ENCODE measurements at regions of chr1 and their contacts with region 1.

Region 1: DNA sequence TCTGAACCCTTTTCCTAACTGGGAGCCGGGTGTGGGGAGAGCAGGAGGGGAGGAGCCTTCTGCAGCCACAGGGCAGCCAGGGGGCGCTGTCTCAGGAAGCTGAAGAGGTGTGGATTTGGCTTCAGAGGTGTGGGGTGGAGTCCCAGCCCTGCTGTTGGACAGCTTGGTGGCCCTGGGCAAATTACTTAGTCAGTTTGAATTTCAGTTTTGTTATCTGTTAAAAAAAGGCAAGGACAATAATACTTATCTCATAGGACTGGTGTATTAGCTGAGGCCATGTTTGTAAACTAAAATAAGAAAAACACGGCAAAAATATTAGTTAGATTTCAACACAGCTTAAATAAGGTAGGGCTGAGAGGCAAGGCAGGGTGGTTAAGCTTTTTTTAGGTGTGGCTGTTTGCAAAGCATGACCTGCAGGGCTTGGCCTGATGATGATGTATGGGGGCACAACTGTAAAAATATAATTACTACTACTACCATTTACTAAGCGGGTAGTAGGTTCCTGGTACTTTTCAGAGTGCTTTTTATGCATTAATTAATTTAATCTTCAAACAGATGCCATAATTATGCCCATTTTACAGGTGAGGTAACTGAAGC is 111.8 kb downstream of the PLXNA2 start:
- DNase-seq: peak; percentile 92
- ATAC-seq: peak; percentile 90
- H3K4me3 Mint-ChIP-seq: peak overlapping the region; percentile 55
- H3K27ac Mint-ChIP-seq: no peak overlapping the region
- H3K4me1 Mint-ChIP-seq: peaks cover 63% of the 10 kb centered on the region
- H3K27me3 Mint-ChIP-seq: peaks cover 20% of the 10 kb centered on the region
- CTCF ChIP-seq: peak; percentile 87

Region 2: DNA sequence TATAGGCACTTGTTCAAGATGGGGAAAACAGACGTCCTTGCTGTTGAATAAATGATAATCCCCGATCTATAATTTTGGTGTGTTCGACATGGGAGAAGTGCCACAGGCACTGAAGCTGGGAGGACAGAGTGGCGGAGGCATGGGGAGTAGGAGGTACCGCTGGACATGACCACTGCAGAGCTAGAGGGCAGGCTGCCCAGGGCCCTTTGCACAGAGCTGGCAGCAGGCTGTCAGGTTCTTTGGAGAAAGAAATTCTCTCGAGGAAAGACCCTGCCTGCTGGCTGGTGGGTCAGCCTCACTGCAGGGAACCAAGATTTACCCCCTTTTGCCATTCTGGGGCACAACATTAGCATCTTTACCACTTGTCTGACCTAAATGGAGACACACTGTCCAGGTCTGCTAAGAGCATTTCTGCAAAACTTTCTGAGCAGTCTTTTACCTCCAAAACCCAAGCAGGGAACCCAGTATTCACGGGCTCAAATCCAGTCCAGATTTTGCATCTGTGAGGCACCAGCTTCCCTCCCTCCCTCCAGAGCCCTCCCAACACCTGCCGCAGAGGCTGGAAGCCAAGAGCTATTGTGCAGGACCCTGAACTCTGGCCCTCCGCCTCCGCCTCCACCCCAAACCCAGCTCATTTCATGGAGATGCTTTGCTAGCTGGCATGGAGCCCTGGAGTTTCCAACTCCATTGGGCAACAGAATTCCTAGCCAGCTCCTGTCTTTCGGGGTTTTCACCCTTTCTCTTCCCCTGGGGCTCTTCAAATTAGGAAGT is 30.5 kb before region 1 on chr1:
- CTCF ChIA-PET with region 1: interaction called, 11 read pairs
- POLR2A ChIA-PET with region 1: no interaction called
- DNase-seq: peak; percentile 26
- ATAC-seq: peak; percentile 79
- H3K4me3 Mint-ChIP-seq: no peak overlapping the region
- H3K27ac Mint-ChIP-seq: no peak overlapping the region
- H3K4me1 Mint-ChIP-seq: peaks cover 34% of the 10 kb centered on the region
- H3K27me3 Mint-ChIP-seq: no peaks in the 10 kb centered on the region; the same call in 1 of the 2 replicates
- CTCF ChIP-seq: no peak

Region 3: GRCh38 chr1:208118841-208119606 is 13.4 kb before region 1 on chr1:
- CTCF ChIA-PET with region 1: interaction called, 24 read pairs
- POLR2A ChIA-PET with region 1: no interaction called
- DNase-seq: no peak
- ATAC-seq: no peak
- H3K4me3 Mint-ChIP-seq: no peak overlapping the region
- H3K27ac Mint-ChIP-seq: no peak overlapping the region
- H3K4me1 Mint-ChIP-seq: peaks cover 7% of the 10 kb centered on the region
- H3K27me3 Mint-ChIP-seq: no peaks in the 10 kb centered on the region
- CTCF ChIP-seq: no peak

Region 4: DNA sequence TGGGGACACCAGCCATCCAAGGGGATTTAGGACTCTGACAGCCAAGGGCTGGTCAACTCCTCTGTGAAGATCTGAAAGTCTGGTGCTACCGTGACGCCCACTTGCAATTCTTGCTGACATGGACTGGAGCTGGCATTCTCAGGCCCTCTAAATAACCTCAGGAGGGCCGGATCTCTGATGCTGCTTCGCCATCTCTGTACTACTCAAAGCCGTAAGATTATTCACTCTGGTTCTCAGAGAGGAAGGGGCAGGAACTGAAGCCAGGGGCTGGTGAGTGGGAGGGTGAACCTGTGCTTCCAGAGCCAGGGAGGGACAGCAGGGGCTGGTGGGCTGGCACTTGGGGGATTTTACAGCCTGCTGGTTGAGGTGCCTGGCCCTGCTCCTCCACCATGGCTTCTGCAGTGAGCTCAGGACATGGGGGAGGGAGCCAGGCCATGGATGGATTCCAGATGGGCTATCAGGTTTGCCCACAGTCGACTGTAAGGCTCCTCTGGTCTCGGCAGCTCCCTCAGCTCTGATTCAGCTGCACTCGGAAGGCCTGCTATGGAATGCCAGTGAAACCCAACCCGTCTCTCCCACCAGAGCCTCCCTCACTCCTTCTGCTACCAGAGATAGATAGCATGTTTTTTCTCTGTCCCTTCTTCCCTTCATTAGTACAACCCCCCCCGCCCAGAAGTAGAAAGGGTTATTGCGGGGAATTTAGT is 27.3 kb after region 1 on chr1:
- CTCF ChIA-PET with region 1: interaction called, 42 read pairs
- POLR2A ChIA-PET with region 1: no interaction called
- DNase-seq: no peak
- ATAC-seq: peak; percentile 37
- H3K4me3 Mint-ChIP-seq: no peak overlapping the region
- H3K27ac Mint-ChIP-seq: no peak overlapping the region
- H3K4me1 Mint-ChIP-seq: peaks cover 51% of the 10 kb centered on the region
- H3K27me3 Mint-ChIP-seq: no peaks in the 10 kb centered on the region; the same call in 1 of the 2 replicates
- CTCF ChIP-seq: no peak

Region 5: GRCh38 chr1:208177656-208178055 is 45.3 kb after region 1 on chr1:
- CTCF ChIA-PET with region 1: interaction called, 23 read pairs
- POLR2A ChIA-PET with region 1: no interaction called
- DNase-seq: peak; percentile 60
- ATAC-seq: peak; percentile 66
- H3K4me3 Mint-ChIP-seq: 0 out of 2 replicates have a peak overlapping the region, but pooled peaks have one; percentile 4
- H3K27ac Mint-ChIP-seq: peak overlapping the region; percentile 91; the same call in 1 of the 2 replicates
- H3K4me1 Mint-ChIP-seq: peaks cover 59% of the 10 kb centered on the region
- H3K27me3 Mint-ChIP-seq: no peaks in the 10 kb centered on the region; the same call in 1 of the 2 replicates
- CTCF ChIP-seq: no peak

Region 6: GRCh38 chr1:208233546-208233945 is 101.2 kb after region 1 on chr1:
- CTCF ChIA-PET with region 1: interaction called, 40 read pairs
- POLR2A ChIA-PET with region 1: interaction called, 3 read pairs
- DNase-seq: peak; percentile 69
- ATAC-seq: peak; percentile 86
- H3K4me3 Mint-ChIP-seq: no peak overlapping the region
- H3K27ac Mint-ChIP-seq: peak overlapping the region; percentile 15
- H3K4me1 Mint-ChIP-seq: peaks cover 63% of the 10 kb centered on the region
- H3K27me3 Mint-ChIP-seq: peaks cover 2% of the 10 kb centered on the region
- CTCF ChIP-seq: no peak

Region 7: DNA sequence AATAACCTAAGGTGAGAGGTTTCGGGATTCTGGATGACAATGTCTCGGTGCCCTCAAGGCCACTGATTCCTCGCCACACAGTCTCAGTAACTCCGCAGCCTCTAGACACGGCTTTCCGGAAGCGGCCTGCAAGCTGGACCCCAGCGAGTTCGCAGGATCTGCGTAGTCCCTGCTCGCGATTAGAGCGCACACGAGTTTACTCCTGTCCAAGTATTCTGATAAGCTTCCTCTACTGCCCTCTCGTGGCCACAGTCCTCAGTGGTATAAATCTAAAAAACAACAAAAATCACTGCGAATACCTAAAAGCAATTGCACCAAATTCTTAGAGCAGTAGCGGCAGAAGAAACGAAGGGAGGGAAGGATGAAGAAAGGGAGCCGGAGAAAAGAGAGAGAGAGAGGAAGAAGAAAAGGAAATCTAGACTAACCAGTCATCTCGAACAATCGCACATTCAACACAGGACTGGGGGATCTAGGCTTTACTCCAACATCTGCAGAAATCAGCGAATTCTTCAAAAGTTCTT is 112.9 kb after region 1 on chr1:
- CTCF ChIA-PET with region 1: interaction called, 78 read pairs
- POLR2A ChIA-PET with region 1: no interaction called
- DNase-seq: peak; percentile 84
- ATAC-seq: peak; percentile 51
- H3K4me3 Mint-ChIP-seq: peak overlapping the region; percentile 79
- H3K27ac Mint-ChIP-seq: no peak overlapping the region
- H3K4me1 Mint-ChIP-seq: peaks cover 24% of the 10 kb centered on the region
- H3K27me3 Mint-ChIP-seq: peaks cover 53% of the 10 kb centered on the region
- CTCF ChIP-seq: peak; percentile 57

Measured in WTC11 (cell line).